CD4-positive, alpha-beta memory T cell (primary cell): ENCODE measurements at regions of chr7 and their contacts with region 1.

Region 1: GRCh38 chr7:29408841-29409243 is 154.8 kb upstream of the PRR15 start:
- DNase-seq: peak; percentile 38 to 65 (median 57)
- H3K4me3 ChIP-seq: no peak overlapping the region
- H3K4me3 Mint-ChIP-seq: no peak overlapping the region
- H3K27ac ChIP-seq: no peak overlapping the region
- H3K27ac Mint-ChIP-seq: no peak overlapping the region
- H3K4me1 ChIP-seq: no peaks in the 10 kb centered on the region
- H3K4me1 Mint-ChIP-seq: no peaks in the 10 kb centered on the region
- H3K27me3 ChIP-seq: no peaks in the 10 kb centered on the region
- H3K27me3 Mint-ChIP-seq: no peaks in the 10 kb centered on the region

Region 2: DNA sequence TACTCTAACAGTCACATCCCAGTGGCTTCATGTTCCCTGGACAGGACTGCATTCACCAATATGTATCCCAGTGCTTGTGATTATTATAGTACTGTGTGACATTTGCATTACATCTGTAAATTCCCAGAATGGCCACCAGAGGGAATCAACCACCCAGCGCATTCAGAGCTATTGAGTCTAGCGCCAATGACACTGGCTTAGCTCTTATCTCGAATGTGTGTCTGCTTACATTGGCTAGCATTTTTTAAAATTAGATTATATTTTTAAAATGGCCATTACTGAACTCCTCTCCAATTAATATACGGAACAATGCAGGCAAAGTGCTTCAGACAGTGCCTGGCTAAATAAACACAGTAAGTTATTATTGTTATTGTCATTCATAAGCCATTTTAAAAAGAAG is 487.0 kb before region 1 on chr7:
- CTCF ChIA-PET with region 1: interaction called, 215 read pairs
- POLR2A ChIA-PET with region 1: interaction called, 4 read pairs
- intact Hi-C with region 1: loop called (anchors 1 kb)
- DNase-seq: peak in 4 of 5 donors; percentile 38 to 42 (median 39)
- H3K4me3 ChIP-seq: no peak overlapping the region
- H3K4me3 Mint-ChIP-seq: no peak overlapping the region
- H3K27ac ChIP-seq: no peak overlapping the region
- H3K27ac Mint-ChIP-seq: peak overlapping the region in 1 of 7 donors; percentile 3
- H3K4me1 ChIP-seq: peaks cover 11% of the 10 kb centered on the region
- H3K4me1 Mint-ChIP-seq: peaks cover 12 to 22% (median 17%) of the 10 kb centered on the region in 4 donors
- H3K27me3 ChIP-seq: no peaks in the 10 kb centered on the region
- H3K27me3 Mint-ChIP-seq: peaks cover 0 to 2% of the 10 kb centered on the region in 2 donors

Region 3: GRCh38 chr7:28926871-28927597 is 481.8 kb before region 1 on chr7:
- CTCF ChIA-PET with region 1: interaction called, 215 read pairs
- POLR2A ChIA-PET with region 1: interaction called, 4 read pairs
- intact Hi-C with region 1: loop called (anchors 1 kb)
- DNase-seq: peak; percentile 57 to 64 (median 61)
- H3K4me3 ChIP-seq: peak overlapping the region; percentile 25 to 52
- H3K4me3 Mint-ChIP-seq: peak overlapping the region; percentile 87 to 97 (median 92)
- H3K27ac ChIP-seq: peak overlapping the region; percentile 22
- H3K27ac Mint-ChIP-seq: peak overlapping the region in 6 of 7 donors; percentile 7 to 85 (median 76)
- H3K4me1 ChIP-seq: peaks cover 17% of the 10 kb centered on the region
- H3K4me1 Mint-ChIP-seq: peaks cover 17 to 33% (median 28%) of the 10 kb centered on the region in 4 donors
- H3K27me3 ChIP-seq: no peaks in the 10 kb centered on the region
- H3K27me3 Mint-ChIP-seq: peaks cover 2 to 6% of the 10 kb centered on the region in 2 donors

Region 4: GRCh38 chr7:29105752-29106668 is 302.8 kb before region 1 on chr7:
- CTCF ChIA-PET with region 1: interaction called, 3 read pairs
- POLR2A ChIA-PET with region 1: no interaction called
- intact Hi-C with region 1: loop called (anchors 2 kb)
- DNase-seq: peak in 1 of 5 donors; percentile 3
- H3K4me3 ChIP-seq: no peak overlapping the region
- H3K4me3 Mint-ChIP-seq: no peak overlapping the region
- H3K27ac ChIP-seq: no peak overlapping the region
- H3K27ac Mint-ChIP-seq: peak overlapping the region in 1 of 7 donors; percentile 53
- H3K4me1 ChIP-seq: no peaks in the 10 kb centered on the region
- H3K4me1 Mint-ChIP-seq: peaks cover 0 to 3% (median 0%) of the 10 kb centered on the region in 4 donors
- H3K27me3 ChIP-seq: no peaks in the 10 kb centered on the region
- H3K27me3 Mint-ChIP-seq: peaks cover 0 to 6% of the 10 kb centered on the region in 2 donors

Region 5: GRCh38 chr7:29189743-29190201 is 219.1 kb before region 1 on chr7:
- CTCF ChIA-PET with region 1: interaction called, 107 read pairs
- POLR2A ChIA-PET with region 1: interaction called, 5 read pairs
- intact Hi-C with region 1: loop called (anchors 1 kb)
- DNase-seq: peak; percentile 23 to 44 (median 32)
- H3K4me3 ChIP-seq: no peak overlapping the region
- H3K4me3 Mint-ChIP-seq: no peak overlapping the region
- H3K27ac ChIP-seq: no peak overlapping the region
- H3K27ac Mint-ChIP-seq: no peak overlapping the region
- H3K4me1 ChIP-seq: no peaks in the 10 kb centered on the region
- H3K4me1 Mint-ChIP-seq: peaks cover 0 to 6% (median 4%) of the 10 kb centered on the region in 4 donors
- H3K27me3 ChIP-seq: no peaks in the 10 kb centered on the region
- H3K27me3 Mint-ChIP-seq: peaks cover 5 to 14% of the 10 kb centered on the region in 2 donors

Region 6: DNA sequence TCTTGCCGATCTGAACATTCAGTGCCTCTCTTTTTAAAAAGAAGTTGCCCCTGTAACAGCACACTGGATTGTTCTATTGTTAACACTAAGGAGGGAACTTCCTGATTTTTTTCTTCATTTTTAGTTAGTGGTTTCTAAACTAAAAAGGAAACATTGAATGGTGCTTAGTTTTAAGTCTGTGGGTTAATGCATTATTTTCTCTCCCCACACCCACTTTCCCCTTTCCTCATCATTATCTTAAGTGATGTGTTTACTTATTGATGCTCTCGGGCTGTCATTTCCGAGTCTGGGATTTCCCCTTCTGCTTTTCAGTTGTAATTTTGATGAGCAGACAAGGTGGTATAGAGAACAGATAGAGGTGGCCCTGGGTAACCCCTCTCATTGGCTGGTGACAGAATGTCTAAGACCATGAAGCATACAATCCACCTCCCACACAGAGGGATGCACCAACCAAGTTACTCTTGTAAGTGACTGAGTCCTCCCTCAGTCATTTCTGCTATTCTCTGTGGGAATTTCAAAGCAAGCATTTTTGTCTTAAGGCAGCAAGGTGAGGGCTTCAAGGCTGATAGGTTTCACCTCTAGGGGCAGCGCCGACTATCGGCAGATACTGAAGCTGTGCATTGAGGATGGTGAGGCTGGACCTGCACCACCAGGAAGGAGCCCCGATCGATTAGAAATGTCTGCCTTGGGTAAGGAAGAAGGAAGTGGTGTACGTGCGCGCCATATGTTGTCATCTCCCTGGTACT is 164.8 kb before region 1 on chr7:
- CTCF ChIA-PET with region 1: no interaction called
- POLR2A ChIA-PET with region 1: no interaction called
- intact Hi-C with region 1: loop called (anchors 2 kb)
- DNase-seq: peak; percentile 39 to 79 (median 43)
- H3K4me3 ChIP-seq: no peak overlapping the region
- H3K4me3 Mint-ChIP-seq: peak overlapping the region in 7 of 8 donors; percentile 17 to 57 (median 35)
- H3K27ac ChIP-seq: peak overlapping the region; percentile 11
- H3K27ac Mint-ChIP-seq: peak overlapping the region in 6 of 7 donors; percentile 25 to 85 (median 62)
- H3K4me1 ChIP-seq: peaks cover 13% of the 10 kb centered on the region
- H3K4me1 Mint-ChIP-seq: peaks cover 6 to 17% (median 13%) of the 10 kb centered on the region in 4 donors
- H3K27me3 ChIP-seq: no peaks in the 10 kb centered on the region
- H3K27me3 Mint-ChIP-seq: no peaks in the 10 kb centered on the region

Region 7: GRCh38 chr7:29424295-29424983 is 15.6 kb after region 1 on chr7:
- CTCF ChIA-PET with region 1: interaction called, 26 read pairs
- POLR2A ChIA-PET with region 1: no interaction called
- intact Hi-C with region 1: no loop called
- DNase-seq: no peak
- H3K4me3 ChIP-seq: no peak overlapping the region
- H3K4me3 Mint-ChIP-seq: no peak overlapping the region
- H3K27ac ChIP-seq: no peak overlapping the region
- H3K27ac Mint-ChIP-seq: no peak overlapping the region
- H3K4me1 ChIP-seq: no peaks in the 10 kb centered on the region
- H3K4me1 Mint-ChIP-seq: no peaks in the 10 kb centered on the region
- H3K27me3 ChIP-seq: no peaks in the 10 kb centered on the region
- H3K27me3 Mint-ChIP-seq: no peaks in the 10 kb centered on the region